CD8-positive, alpha-beta T cell (primary cell): ENCODE measurements at regions of chr11 and their contacts with region 1.

Region 1: GRCh38 chr11:122655527-122656072 is at the start of gene UBASH3B:
- DNase-seq: peak; percentile 10 to 75 (median 57)
- ATAC-seq: peak; percentile 72
- H3K4me3 ChIP-seq: peak within 1 kb of the TSS; percentile 96 to 97
- H3K4me3 Mint-ChIP-seq: peak within 1 kb of the TSS; percentile 99
- H3K27ac ChIP-seq: peak within 1 kb of the TSS; percentile 61 to 71
- H3K27ac Mint-ChIP-seq: peak within 1 kb of the TSS; percentile 93
- H3K4me1 ChIP-seq: peaks cover 44% of the 10 kb centered on the region
- H3K4me1 Mint-ChIP-seq: peaks cover 46% of the 10 kb centered on the region
- H3K27me3 ChIP-seq: peaks cover 0 to 2% of the 10 kb centered on the region in 2 experiments
- H3K27me3 Mint-ChIP-seq: no peaks in the 10 kb centered on the region
- CTCF ChIP-seq: no peak
- total RNA-seq, gene UBASH3B: 16.7 to 19.3 TPM

Region 2: GRCh38 chr11:122108192-122108799 is 547.3 kb before region 1 on chr11:
- CTCF ChIA-PET with region 1: no interaction called
- POLR2A ChIA-PET with region 1: no interaction called
- intact Hi-C with region 1: no loop called
- DNase-seq: no peak
- ATAC-seq: no peak
- H3K4me3 ChIP-seq: no peak overlapping the region
- H3K4me3 Mint-ChIP-seq: no peak overlapping the region
- H3K27ac ChIP-seq: no peak overlapping the region
- H3K27ac Mint-ChIP-seq: no peak overlapping the region
- H3K4me1 ChIP-seq: no peaks in the 10 kb centered on the region
- H3K4me1 Mint-ChIP-seq: no peaks in the 10 kb centered on the region
- H3K27me3 ChIP-seq: no peaks in the 10 kb centered on the region
- H3K27me3 Mint-ChIP-seq: peaks cover 20% of the 10 kb centered on the region
- CTCF ChIP-seq: no peak

Region 3: DNA sequence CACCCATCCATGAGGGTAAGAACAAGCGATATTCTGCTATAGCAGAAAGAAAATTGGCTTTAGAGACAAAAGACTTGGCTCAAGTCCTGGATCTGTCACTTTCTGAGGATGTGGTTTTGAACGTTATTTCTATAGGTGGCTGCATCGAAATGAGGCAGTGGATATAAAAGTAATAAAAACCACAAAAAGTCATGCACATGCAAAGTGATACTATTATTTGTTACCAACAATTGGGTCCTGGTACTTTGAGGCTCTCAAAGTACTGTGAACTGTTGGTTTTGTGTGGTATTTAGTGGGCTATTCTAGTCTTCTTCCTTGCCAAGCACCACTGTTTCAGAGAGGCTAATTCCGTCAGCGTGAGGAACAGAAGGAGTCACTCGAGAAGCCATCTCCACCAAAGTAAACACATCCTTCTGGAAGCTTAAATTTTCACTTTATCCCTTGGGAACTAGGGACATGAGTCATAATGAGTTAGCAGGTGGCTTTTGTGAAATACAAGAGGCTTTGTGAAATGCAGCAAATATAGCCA is 13.0 kb after region 1 on chr11:
- CTCF ChIA-PET with region 1: interaction called, 49 read pairs
- POLR2A ChIA-PET with region 1: interaction called, 26 read pairs
- intact Hi-C with region 1: loop called in 1 of 2 experiments (anchors 1 kb)
- DNase-seq: peak in 2 of 9 experiments; percentile 38 to 66
- ATAC-seq: peak; percentile 72
- H3K4me3 ChIP-seq: no peak overlapping the region
- H3K4me3 Mint-ChIP-seq: peak overlapping the region; percentile 42
- H3K27ac ChIP-seq: peak overlapping the region; percentile 4 to 39
- H3K27ac Mint-ChIP-seq: peak overlapping the region; percentile 90
- H3K4me1 ChIP-seq: peaks cover 63% of the 10 kb centered on the region
- H3K4me1 Mint-ChIP-seq: peaks cover 77% of the 10 kb centered on the region
- H3K27me3 ChIP-seq: no peaks in the 10 kb centered on the region
- H3K27me3 Mint-ChIP-seq: no peaks in the 10 kb centered on the region
- CTCF ChIP-seq: no peak

Region 4: GRCh38 chr11:122690801-122691548 is 35.4 kb after region 1 on chr11:
- CTCF ChIA-PET with region 1: interaction called, 36 read pairs
- POLR2A ChIA-PET with region 1: interaction called, 23 read pairs
- intact Hi-C with region 1: loop called (anchors 1 kb)
- DNase-seq: peak in 2 of 9 experiments; percentile 20 to 56
- ATAC-seq: peak; percentile 60
- H3K4me3 ChIP-seq: peak overlapping the region; percentile 25 to 38
- H3K4me3 Mint-ChIP-seq: peak overlapping the region; percentile 79
- H3K27ac ChIP-seq: peak overlapping the region; percentile 32 to 83
- H3K27ac Mint-ChIP-seq: peak overlapping the region; percentile 91
- H3K4me1 ChIP-seq: peaks cover 65% of the 10 kb centered on the region
- H3K4me1 Mint-ChIP-seq: peaks cover 83% of the 10 kb centered on the region
- H3K27me3 ChIP-seq: no peaks in the 10 kb centered on the region
- H3K27me3 Mint-ChIP-seq: no peaks in the 10 kb centered on the region
- CTCF ChIP-seq: no peak

Region 5: DNA sequence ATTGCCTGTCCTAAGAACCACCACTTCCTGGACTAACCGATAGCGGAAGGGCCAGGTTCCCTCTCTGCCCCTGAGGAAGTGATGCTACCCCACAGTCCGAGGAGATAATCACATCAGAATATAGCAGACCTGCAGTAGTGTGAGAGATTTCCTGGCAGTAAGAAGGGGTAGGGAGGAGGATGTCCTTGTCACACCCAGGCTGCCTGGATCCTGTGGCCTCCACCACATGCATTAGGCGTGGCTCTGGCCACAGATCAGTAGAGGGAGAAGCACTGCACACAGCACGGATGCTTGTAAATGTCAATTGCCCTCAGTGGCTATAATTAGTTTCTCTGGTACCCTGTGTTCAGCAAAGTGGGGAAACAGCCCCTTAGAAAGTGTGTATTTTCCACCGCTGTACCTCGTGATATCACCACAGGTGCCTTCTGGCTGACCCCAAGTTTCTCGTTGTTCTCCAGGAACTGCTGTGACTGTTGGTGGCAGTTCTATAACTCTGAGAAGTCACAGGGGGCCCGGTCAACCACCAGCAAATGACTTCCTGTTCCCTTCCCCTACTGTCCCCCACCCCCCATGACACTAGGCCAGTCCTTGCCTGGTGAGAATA is 61.8 kb after region 1 on chr11:
- CTCF ChIA-PET with region 1: interaction called, 5 read pairs
- POLR2A ChIA-PET with region 1: no interaction called
- intact Hi-C with region 1: loop called in 1 of 2 experiments (anchors 2 kb)
- DNase-seq: peak in 8 of 9 experiments; percentile 20 to 68 (median 47)
- ATAC-seq: peak; percentile 61
- H3K4me3 ChIP-seq: no peak overlapping the region
- H3K4me3 Mint-ChIP-seq: peak overlapping the region; percentile 56
- H3K27ac ChIP-seq: peak overlapping the region; percentile 23 to 55
- H3K27ac Mint-ChIP-seq: peak overlapping the region; percentile 91
- H3K4me1 ChIP-seq: peaks cover 69% of the 10 kb centered on the region
- H3K4me1 Mint-ChIP-seq: peaks cover 80% of the 10 kb centered on the region
- H3K27me3 ChIP-seq: no peaks in the 10 kb centered on the region
- H3K27me3 Mint-ChIP-seq: no peaks in the 10 kb centered on the region
- CTCF ChIP-seq: no peak

Region 6: DNA sequence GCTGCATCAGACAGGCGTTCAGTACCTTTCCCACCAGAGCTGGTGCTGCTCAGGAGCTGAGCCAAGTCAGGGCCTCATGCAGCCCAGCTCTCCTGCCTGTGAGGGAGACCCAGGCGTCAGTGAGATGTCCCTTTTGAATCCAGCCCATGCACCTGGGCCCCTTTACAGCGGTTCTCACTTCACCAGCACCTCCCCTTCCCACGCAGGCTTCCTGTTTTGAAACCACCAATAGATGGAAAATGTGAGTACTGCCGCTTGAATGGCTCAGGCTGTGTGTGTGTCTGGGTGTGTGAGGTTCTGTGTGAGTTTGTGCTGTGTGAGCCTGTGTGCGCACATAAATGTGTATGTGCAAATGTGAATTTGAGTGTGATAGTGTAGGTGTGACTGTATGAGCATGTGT is 88.3 kb after region 1 on chr11:
- CTCF ChIA-PET with region 1: interaction called, 13 read pairs
- POLR2A ChIA-PET with region 1: interaction called, 33 read pairs
- intact Hi-C with region 1: loop called in 1 of 2 experiments (anchors 2 kb)
- DNase-seq: peak; percentile 19 to 86 (median 73)
- ATAC-seq: peak; percentile 46
- H3K4me3 ChIP-seq: peak overlapping the region; percentile 24 to 40
- H3K4me3 Mint-ChIP-seq: no peak overlapping the region
- H3K27ac ChIP-seq: peak overlapping the region; percentile 46 to 70
- H3K27ac Mint-ChIP-seq: no peak overlapping the region
- H3K4me1 ChIP-seq: peaks cover 71% of the 10 kb centered on the region
- H3K4me1 Mint-ChIP-seq: peaks cover 15% of the 10 kb centered on the region
- H3K27me3 ChIP-seq: no peaks in the 10 kb centered on the region
- H3K27me3 Mint-ChIP-seq: no peaks in the 10 kb centered on the region
- CTCF ChIP-seq: no peak

Region 7: DNA sequence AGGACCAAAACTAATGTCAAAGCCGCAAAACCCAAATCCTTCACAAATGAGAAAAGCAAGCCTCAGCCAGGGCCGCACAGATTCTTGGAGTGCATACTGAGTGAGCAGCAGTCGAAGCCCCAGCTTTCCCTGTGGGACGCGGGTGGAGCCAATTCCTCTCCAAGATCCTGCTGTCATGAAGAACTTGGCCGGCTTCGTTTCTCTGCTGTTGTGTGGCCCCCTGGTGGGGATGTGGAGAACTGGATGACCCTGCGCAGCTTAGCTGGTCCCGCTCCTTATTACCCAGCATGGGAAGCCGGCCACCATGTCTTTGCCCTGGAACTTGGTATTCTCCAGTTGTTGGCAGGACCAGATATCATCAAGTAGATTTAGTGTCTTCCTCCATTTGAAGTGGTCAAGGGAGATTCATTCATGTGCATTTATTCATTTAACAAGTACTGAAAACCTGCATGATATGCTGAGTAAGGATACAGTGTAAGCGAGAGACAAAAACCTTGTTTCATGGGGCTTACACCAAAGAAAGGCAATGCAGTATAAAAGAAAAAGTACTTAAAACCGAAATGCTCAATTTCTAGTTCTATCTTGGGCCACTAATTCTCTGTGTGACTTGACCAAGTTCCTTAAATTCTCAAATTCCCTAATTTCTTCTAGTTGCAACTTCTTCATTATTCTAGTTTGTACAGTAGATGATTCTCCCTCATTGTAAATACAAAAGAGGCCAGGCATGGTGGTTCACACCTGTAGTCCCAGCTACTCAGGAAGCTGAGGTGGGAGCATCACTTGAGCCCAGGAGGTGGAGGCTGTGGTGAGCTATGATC is 126.0 kb after region 1 on chr11:
- CTCF ChIA-PET with region 1: interaction called, 10 read pairs
- POLR2A ChIA-PET with region 1: interaction called, 3 read pairs
- intact Hi-C with region 1: no loop called
- DNase-seq: peak; percentile 48 to 85 (median 76)
- ATAC-seq: peak; percentile 86
- H3K4me3 ChIP-seq: no peak overlapping the region
- H3K4me3 Mint-ChIP-seq: no peak overlapping the region
- H3K27ac ChIP-seq: no peak overlapping the region
- H3K27ac Mint-ChIP-seq: no peak overlapping the region
- H3K4me1 ChIP-seq: no peaks in the 10 kb centered on the region
- H3K4me1 Mint-ChIP-seq: peaks cover 2% of the 10 kb centered on the region
- H3K27me3 ChIP-seq: no peaks in the 10 kb centered on the region
- H3K27me3 Mint-ChIP-seq: no peaks in the 10 kb centered on the region
- CTCF ChIP-seq: peak; percentile 88

Region 8: GRCh38 chr11:122882857-122883645 is 227.5 kb after region 1 on chr11:
- CTCF ChIA-PET with region 1: no interaction called
- POLR2A ChIA-PET with region 1: no interaction called
- intact Hi-C with region 1: no loop called
- DNase-seq: peak; percentile 13 to 72 (median 52)
- ATAC-seq: peak; percentile 79
- H3K4me3 ChIP-seq: peak overlapping the region; percentile 71 to 83
- H3K4me3 Mint-ChIP-seq: peak overlapping the region; percentile 85
- H3K27ac ChIP-seq: peak overlapping the region; percentile 64 to 90
- H3K27ac Mint-ChIP-seq: peak overlapping the region; percentile 87
- H3K4me1 ChIP-seq: peaks cover 12% of the 10 kb centered on the region
- H3K4me1 Mint-ChIP-seq: peaks cover 24% of the 10 kb centered on the region
- H3K27me3 ChIP-seq: no peaks in the 10 kb centered on the region
- H3K27me3 Mint-ChIP-seq: no peaks in the 10 kb centered on the region
- CTCF ChIP-seq: no peak